ENCODE measurements at regions of chr3 and their contacts with region 1.

Region 1: DNA sequence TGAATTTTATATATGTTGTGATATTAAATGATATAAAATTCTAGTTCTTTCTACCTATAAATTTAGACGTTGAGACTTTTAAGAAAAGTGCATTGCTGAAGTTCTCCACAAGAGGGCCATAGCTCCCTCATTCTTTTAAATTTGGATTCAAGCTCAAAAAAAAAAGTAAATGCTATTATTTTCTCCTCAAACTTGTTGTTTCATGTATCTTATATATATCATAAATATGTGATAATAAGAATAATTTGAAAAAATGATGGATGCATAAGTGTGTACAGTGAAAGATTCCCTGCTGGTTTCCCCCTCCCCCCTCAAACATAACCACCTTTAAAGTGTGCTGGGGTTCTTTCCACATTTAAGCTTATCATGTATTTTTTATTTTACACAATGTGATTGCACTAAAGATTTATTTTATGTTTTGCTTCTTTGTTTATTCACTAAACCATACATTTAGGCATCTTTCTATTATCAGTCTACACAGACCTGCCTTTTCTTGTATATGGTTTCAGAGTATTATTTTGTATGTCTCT is 769.4 kb upstream of the GOLIM4 start:
- DNase-seq: no peak
- H3K4me3 ChIP-seq: no peak overlapping the region
- H3K27ac ChIP-seq: no peak overlapping the region
- H3K4me1 ChIP-seq: no peaks in the 10 kb centered on the region
- H3K27me3 ChIP-seq: no peaks in the 10 kb centered on the region
- CTCF ChIP-seq: peak in 2 of 3 experiments; percentile 22 to 57; a peak in 2 of 4 replicates
- EP300 ChIP-seq: no peak
- POLR2A ChIP-seq: no peak
- RAD21 ChIP-seq: peak in 1 of 2 experiments; percentile 66

Region 2: GRCh38 chr3:168878655-168879054 is 13.6 kb after region 1 on chr3:
- CTCF ChIA-PET with region 1: interaction called, 57 read pairs
- POLR2A ChIA-PET with region 1: no interaction called
- DNase-seq: no peak
- H3K4me3 ChIP-seq: no peak overlapping the region
- H3K27ac ChIP-seq: no peak overlapping the region
- H3K4me1 ChIP-seq: peaks cover 0 to 7% (median 3%) of the 10 kb centered on the region in 4 experiments; a peak in 5 of 7 replicates
- H3K27me3 ChIP-seq: no peaks in the 10 kb centered on the region
- CTCF ChIP-seq: no peak
- EP300 ChIP-seq: no peak
- POLR2A ChIP-seq: no peak
- RAD21 ChIP-seq: no peak

Region 3: DNA sequence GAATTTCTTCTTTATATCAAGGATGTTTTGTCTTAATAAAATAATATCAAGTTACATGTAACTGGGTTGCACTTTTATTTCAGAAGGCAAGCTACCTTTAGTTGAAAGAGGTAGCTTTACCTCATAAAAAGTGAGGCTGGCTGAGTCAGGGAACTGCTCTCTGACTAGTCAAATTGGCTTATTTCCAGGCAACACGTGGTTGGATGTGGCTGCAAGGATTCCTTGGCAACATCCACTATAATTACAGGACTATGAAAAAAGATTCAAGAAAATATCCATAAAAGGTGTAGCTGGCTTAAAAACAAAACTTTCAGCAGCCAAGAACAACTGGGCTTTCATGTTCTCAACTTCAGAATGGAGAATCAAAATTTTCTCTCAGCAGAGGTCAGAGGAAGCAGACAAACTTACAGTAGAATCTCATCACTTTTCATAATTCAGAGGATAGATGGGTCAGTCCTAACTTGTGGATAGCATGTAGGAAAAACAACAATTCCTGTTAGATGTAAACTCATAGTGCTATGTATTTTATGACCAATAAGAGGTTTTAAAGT is 19.3 kb after region 1 on chr3:
- CTCF ChIA-PET with region 1: interaction called, 19 read pairs
- POLR2A ChIA-PET with region 1: no interaction called
- DNase-seq: no peak
- H3K4me3 ChIP-seq: no peak overlapping the region
- H3K27ac ChIP-seq: no peak overlapping the region
- H3K4me1 ChIP-seq: no peaks in the 10 kb centered on the region; a peak in 1 of 7 replicates
- H3K27me3 ChIP-seq: no peaks in the 10 kb centered on the region
- CTCF ChIP-seq: no peak
- EP300 ChIP-seq: no peak
- POLR2A ChIP-seq: no peak
- RAD21 ChIP-seq: no peak

Region 4: DNA sequence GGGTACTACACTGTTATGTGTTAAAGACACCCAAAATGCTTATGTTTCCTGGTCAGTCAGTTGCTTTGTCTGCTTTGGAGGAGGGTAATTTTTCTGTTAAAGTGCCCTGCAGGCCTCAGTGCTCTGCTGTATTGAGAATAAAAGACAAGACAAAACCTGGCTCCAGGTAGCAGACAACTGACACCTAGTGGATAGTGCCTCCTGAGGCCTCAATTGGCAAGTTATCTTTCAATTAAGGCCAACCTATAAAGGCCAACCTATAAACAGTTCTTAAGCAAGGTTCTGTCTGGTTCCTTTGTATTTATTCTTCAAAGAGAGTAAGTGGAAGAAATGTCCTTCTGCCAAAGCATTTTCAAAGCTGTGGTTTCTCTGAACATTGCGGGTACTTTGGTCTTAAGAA is 24.6 kb after region 1 on chr3:
- CTCF ChIA-PET with region 1: interaction called, 19 read pairs
- POLR2A ChIA-PET with region 1: no interaction called
- DNase-seq: peak in 1 of 2 experiments; percentile 5
- H3K4me3 ChIP-seq: no peak overlapping the region
- H3K27ac ChIP-seq: no peak overlapping the region
- H3K4me1 ChIP-seq: no peaks in the 10 kb centered on the region
- H3K27me3 ChIP-seq: no peaks in the 10 kb centered on the region
- CTCF ChIP-seq: peak in 2 of 3 experiments; percentile 48 to 57; a peak in 2 of 4 replicates
- EP300 ChIP-seq: no peak
- POLR2A ChIP-seq: no peak
- RAD21 ChIP-seq: peak; percentile 46 to 69